ENCODE measurements at regions of chr4 and their contacts with region 1.

Region 1: DNA sequence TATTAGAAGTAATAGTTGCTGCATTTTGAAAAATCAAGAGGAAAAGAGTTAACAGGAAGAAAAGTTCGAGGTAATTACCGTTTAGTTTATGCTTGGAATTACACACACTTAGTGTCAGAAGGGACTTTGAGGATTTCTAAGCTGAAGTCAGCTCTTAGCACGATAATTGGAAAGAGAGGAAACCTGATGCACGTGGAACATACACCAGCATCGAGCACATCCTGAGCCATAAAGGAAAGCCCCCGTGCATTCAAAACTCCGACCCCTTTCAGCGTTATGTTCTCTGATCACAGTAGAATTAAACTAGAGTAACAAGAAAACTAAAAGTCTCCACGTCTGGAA is 400 bp upstream of the PAQR3 start:
- H3K4me3 Mint-ChIP-seq: peak overlapping the region; percentile 85
- H3K27ac Mint-ChIP-seq: peak overlapping the region; percentile 75
- H3K4me1 Mint-ChIP-seq: peaks cover 34% of the 10 kb centered on the region
- H3K27me3 Mint-ChIP-seq: peaks cover 11% of the 10 kb centered on the region

Region 2: GRCh38 chr4:77481856-77482255 is 1457.8 kb before region 1 on chr4:
- intact Hi-C with region 1: no loop called
- H3K4me3 Mint-ChIP-seq: no peak overlapping the region
- H3K27ac Mint-ChIP-seq: no peak overlapping the region
- H3K4me1 Mint-ChIP-seq: no peaks in the 10 kb centered on the region
- H3K27me3 Mint-ChIP-seq: no peaks in the 10 kb centered on the region

Region 3: GRCh38 chr4:78907638-78908037 is 32.0 kb before region 1 on chr4:
- intact Hi-C with region 1: no loop called
- H3K4me3 Mint-ChIP-seq: no peak overlapping the region
- H3K27ac Mint-ChIP-seq: no peak overlapping the region
- H3K4me1 Mint-ChIP-seq: no peaks in the 10 kb centered on the region
- H3K27me3 Mint-ChIP-seq: no peaks in the 10 kb centered on the region

Region 4: DNA sequence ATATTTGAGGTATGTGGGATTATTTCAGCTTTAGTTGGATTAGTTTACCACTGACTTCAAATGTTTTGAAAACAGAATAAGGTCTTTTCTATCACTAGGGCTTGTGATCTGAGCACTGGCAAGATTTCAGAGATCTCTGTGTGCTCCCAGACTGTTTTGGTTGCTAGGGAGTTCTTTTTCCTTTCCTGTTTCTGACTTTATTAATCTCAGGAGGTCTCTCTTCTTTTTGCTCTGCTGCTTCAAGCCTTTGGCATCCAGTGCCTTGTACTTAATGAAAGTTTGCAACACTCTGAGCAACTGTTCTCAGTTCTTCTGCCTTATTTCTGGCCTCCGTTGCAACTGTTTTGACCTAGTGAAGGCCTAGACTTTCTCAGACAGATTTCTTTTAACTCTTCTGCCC is 31.7 kb after region 1 on chr4:
- intact Hi-C with region 1: no loop called
- H3K4me3 Mint-ChIP-seq: no peak overlapping the region
- H3K27ac Mint-ChIP-seq: no peak overlapping the region
- H3K4me1 Mint-ChIP-seq: no peaks in the 10 kb centered on the region
- H3K27me3 Mint-ChIP-seq: no peaks in the 10 kb centered on the region

Region 5: DNA sequence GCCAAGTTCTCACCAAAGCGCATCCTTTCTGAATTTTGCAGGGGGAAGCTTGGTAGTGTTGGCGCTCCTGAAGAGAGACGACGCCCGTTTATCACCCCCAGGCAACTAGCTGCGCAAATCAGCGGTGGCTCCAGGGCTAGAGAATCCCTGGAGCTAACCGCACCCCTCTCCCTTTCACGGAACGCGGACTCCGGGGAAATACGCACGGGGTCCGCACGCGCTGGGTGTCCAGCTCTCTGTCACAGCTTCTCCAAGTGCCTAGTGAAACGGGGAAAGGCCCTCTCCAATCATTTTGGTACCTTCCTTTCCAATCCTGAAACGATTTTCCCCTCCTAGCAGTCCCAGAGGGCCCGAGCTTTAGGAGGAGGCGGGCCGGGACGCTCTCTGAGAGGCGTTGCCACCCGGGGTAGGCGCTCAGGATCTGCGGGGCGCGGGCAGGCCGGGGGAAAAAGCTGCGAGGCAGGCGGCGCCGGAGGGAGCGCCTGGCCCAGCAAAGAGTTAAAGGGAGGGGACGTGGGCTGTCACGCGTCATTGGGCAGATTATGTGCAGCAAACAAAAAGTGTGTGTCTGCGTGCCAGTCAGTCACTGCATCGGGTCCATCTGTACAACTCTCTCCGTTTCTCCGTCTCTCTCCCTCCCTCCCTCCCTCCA is 1257.4 kb after region 1 on chr4 and contains the start of gene PRDM8:
- intact Hi-C with region 1: loop called (anchors 10 kb)
- H3K4me3 Mint-ChIP-seq: peak within 1 kb of the TSS; percentile 63
- H3K27ac Mint-ChIP-seq: no peak within 1 kb of the TSS
- H3K4me1 Mint-ChIP-seq: peaks cover 46% of the 10 kb centered on the region
- H3K27me3 Mint-ChIP-seq: peaks cover 72% of the 10 kb centered on the region